GM10248 (cell line): ENCODE measurements at regions of chr10 and their contacts with region 1.

Region 1: DNA sequence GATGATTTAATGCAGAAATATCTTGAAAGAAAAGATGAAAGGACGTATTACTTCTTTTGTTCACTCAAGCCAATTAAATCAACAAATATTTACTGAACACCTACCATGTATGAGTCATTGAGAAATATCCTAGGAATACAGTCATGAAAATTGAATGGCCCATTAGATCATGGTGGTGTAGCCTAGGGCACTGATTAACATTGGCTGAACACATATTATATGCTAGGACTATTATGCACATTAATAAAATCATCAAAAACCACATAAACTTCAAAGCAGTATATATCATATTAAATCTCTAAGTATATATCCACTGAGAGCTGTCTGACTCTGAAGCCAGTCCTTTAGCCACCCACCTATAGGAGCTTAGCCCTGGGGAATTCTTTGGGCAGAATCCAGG is 41.8 kb downstream of the FAM204A start:
- DNase-seq: no peak
- CTCF ChIP-seq: no peak

Region 2: GRCh38 chr10:117431160-117431559 is 869.2 kb before region 1 on chr10:
- CTCF ChIA-PET with region 1: no interaction called
- POLR2A ChIA-PET with region 1: interaction called, 10 read pairs
- DNase-seq: no peak
- CTCF ChIP-seq: no peak

Region 3: DNA sequence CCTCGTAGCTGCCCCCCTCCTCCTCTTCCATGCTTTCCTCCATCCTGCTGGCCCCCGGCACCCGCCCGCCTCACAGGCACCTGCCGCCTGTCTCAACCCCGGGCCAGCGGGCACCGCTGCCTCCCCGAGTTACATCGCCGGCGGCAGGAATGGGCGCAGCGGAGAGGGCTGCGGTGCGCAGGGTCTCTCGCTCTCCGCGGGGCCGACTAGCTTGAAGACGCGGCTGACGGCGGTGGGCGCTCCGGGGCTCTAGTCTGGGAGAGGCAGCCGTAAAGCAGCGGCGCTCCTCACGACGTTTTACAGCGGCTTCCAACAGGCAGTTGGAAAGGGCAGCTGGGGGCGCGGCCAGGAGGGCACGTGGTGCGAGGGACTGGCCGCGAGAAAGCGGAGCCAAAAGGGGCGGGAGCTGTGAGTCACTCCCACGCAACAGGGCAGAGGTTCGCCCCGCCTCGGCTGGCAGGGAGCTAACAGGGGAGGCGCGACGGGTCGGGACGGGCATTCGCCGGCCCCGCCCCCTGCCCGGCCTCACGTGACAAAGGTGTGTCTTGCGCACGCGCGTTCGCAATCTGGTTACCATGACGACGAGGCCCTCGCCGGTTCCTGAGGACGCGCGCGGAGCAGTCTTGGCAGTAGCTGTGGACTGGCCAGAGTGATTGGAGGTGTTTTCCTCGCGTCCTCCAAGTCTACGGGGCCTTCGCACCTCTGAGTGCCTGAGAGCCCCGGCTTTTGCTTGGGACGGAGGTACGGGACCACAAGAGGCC is 454.6 kb after region 1 on chr10 and contains the start of gene CACUL1:
- CTCF ChIA-PET with region 1: no interaction called
- POLR2A ChIA-PET with region 1: no interaction called
- DNase-seq: peak; percentile 100
- CTCF ChIP-seq: no peak